Psoas muscle (tissue), 8 donors: ENCODE measurements at regions of chr4 and their contacts with region 1.

Region 1: DNA sequence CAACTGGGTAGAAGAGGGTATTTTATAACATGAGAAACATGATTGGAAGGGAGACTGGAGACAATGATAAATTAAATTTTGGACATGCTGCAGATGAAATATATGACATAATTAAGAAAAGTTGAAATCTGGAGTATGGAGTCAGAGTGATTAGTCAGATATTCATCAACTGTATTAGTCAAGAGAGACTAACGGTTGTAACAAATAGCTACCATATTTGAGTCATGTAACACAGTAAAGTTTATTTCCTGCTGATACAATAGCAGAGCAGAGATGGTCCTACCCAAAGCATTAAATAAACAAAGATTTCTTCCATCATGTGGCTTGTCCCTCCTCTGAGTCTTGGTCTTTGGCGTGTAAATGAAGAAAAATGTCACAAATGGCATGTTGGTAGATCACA is 321.3 kb downstream of the GALNTL6 start:
- DNase-seq: no peak
- ATAC-seq: no peak
- H3K4me3 ChIP-seq: no peak overlapping the region
- H3K27ac ChIP-seq: no peak overlapping the region
- H3K4me1 ChIP-seq: no peaks in the 10 kb centered on the region
- H3K27me3 ChIP-seq: no peaks in the 10 kb centered on the region
- CTCF ChIP-seq: no peak

Region 2: DNA sequence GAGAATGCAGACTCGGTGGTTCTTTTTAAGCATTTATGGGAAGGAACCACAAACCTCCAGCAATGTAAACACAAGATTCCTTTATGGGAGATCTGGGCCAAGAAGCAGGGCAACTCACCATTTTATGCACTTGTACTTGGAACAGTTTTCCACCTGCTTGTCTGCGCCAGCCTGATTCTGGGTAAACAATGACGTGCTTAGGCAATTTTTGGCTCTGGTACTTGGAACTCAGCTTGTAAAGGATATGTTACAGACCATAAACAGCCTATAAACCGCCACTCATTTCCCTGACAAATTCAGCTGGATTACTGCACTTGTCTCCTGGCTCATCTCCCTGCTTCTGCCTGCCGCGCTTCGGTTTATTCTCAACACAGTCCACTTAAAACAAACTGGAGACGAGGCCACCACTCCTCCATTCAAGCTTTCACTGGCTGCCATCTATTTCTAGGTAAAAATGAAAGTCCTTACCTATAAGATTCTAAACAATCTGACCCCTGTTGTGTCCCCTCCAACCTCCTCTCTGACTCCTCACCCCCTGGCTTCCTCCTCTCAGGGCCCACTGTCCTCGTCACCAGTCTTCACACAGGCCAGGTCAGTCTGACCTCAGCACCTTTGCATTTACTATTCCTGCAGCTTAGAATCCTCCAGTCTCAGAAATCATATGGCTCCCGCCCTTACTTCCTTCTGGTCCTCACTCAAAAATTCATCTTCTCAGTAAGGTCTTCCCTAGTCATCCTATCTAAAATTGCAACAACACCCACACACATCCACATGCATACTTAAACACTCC is 828.2 kb after region 1 on chr4:
- intact Hi-C with region 1: loop called in 1 of 2 experiments (anchors 5 kb)
- DNase-seq: no peak
- ATAC-seq: peak in 3 of 4 donors; percentile 76 to 85 (median 81)
- H3K4me3 ChIP-seq: no peak overlapping the region
- H3K27ac ChIP-seq: no peak overlapping the region
- H3K4me1 ChIP-seq: peaks cover 8% of the 10 kb centered on the region
- H3K27me3 ChIP-seq: no peaks in the 10 kb centered on the region
- CTCF ChIP-seq: no peak